Gastrocnemius medialis (tissue), 4 donors: ENCODE measurements at regions of chr1 and their contacts with region 1.

Region 1: GRCh38 chr1:32448773-32449456 is 16.0 kb upstream of the ZBTB8B start:
- DNase-seq: no peak
- ATAC-seq: no peak
- H3K4me3 ChIP-seq: no peak overlapping the region
- H3K27ac ChIP-seq: no peak overlapping the region
- H3K4me1 ChIP-seq: no peaks in the 10 kb centered on the region
- H3K27me3 ChIP-seq: no peaks in the 10 kb centered on the region
- CTCF ChIP-seq: peak in 1 of 5 experiments; percentile 30
- POLR2A ChIP-seq: no peak

Region 2: DNA sequence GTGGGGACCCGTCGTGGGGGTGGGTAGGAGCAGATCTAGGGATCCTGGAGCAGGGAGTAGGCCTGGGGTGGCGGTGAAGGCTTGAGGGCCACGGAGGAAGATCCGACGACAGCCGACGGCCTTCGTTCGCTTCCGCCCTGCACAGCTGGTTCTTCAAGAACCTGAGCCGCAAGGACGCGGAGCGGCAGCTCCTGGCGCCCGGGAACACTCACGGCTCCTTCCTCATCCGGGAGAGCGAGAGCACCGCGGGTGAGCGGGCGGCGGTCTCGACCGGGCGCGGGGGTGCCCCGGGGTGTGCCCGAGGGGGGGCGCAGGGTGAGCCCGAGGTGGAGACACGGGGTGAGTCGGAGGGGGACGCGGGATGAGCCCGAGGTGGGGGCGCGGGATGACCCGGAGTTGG is 173.5 kb before region 1 on chr1:
- in situ Hi-C with region 1: no loop called
- intact Hi-C with region 1: no loop called
- DNase-seq: no peak
- ATAC-seq: no peak
- H3K4me3 ChIP-seq: no peak overlapping the region
- H3K27ac ChIP-seq: no peak overlapping the region
- H3K4me1 ChIP-seq: no peaks in the 10 kb centered on the region
- H3K27me3 ChIP-seq: peaks cover 13 to 35% (median 20%) of the 10 kb centered on the region in 3 donors
- CTCF ChIP-seq: no peak
- POLR2A ChIP-seq: no peak

Region 3: GRCh38 chr1:32500387-32501209 is 51.7 kb after region 1 on chr1:
- in situ Hi-C with region 1: no loop called
- intact Hi-C with region 1: loop called (anchors 5 kb)
- DNase-seq: peak; percentile 59 to 76
- ATAC-seq: peak; percentile 55 to 69
- H3K4me3 ChIP-seq: peak overlapping the region; percentile 58 to 71 (median 63)
- H3K27ac ChIP-seq: peak overlapping the region; percentile 89 to 96 (median 92)
- H3K4me1 ChIP-seq: peaks cover 25 to 34% of the 10 kb centered on the region in 2 donors
- H3K27me3 ChIP-seq: no peaks in the 10 kb centered on the region
- CTCF ChIP-seq: peak in 4 of 5 experiments; percentile 36 to 60 (median 51)
- POLR2A ChIP-seq: peak; percentile 54 to 66

Region 4: GRCh38 chr1:32521165-32521564 is 72.2 kb after region 1 on chr1:
- in situ Hi-C with region 1: no loop called
- intact Hi-C with region 1: loop called (anchors 5 kb)
- DNase-seq: no peak
- ATAC-seq: no peak
- H3K4me3 ChIP-seq: peak overlapping the region in 1 of 4 donors; percentile 52
- H3K27ac ChIP-seq: no peak overlapping the region
- H3K4me1 ChIP-seq: peaks cover 0 to 4% of the 10 kb centered on the region in 2 donors
- H3K27me3 ChIP-seq: no peaks in the 10 kb centered on the region
- CTCF ChIP-seq: no peak
- POLR2A ChIP-seq: no peak

Region 5: DNA sequence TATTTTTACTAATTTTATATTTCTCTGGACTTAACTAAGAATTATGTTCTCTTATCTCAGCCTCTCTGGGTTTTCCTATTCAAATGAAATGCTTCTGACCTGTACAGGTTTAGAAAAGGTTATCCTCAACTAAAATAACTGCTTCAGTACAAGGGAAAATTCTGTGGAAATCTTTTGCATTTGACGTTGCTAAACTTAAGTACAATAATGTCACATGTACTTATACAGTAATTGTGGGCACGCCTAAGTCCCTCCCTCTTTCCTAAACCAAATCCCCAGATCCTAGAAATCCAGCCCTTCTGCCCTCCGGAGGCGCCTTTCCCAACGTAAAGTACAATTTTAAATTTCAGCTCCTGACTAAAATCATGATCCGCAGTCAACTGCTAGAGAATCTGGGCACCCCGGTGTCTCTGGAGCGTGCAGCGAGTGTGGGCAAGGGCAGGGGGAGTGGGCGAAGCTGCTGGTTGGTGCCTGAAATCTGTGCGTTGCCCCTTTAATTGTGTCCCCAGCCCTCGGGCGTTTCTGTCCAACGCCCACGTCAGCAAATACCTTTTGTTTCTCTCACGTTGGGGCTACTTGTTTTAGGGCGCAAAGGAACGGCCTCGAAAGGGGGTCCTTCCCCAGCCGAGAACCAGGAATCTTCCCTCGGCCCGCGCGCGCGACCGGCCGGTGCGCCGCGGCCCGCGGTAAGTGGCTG is 90.1 kb after region 1 on chr1 and contains the start of gene ZBTB8A:
- in situ Hi-C with region 1: no loop called
- intact Hi-C with region 1: loop called (anchors 5 kb)
- DNase-seq: peak in 1 of 2 donors; percentile 31
- ATAC-seq: peak; percentile 62 to 75
- H3K4me3 ChIP-seq: peak within 1 kb of the TSS; percentile 59 to 79 (median 67)
- H3K27ac ChIP-seq: peak within 1 kb of the TSS; percentile 51 to 80 (median 75)
- H3K4me1 ChIP-seq: no peaks in the 10 kb centered on the region
- H3K27me3 ChIP-seq: no peaks in the 10 kb centered on the region
- CTCF ChIP-seq: no peak
- POLR2A ChIP-seq: no peak
- total RNA-seq, gene ZBTB8A: 2.5 to 5.2 (median 3.9) TPM

Region 6: GRCh38 chr1:32612189-32612881 is 163.4 kb after region 1 on chr1:
- in situ Hi-C with region 1: no loop called
- intact Hi-C with region 1: loop called (anchors 10 kb)
- DNase-seq: peak; percentile 85 to 93
- ATAC-seq: peak; percentile 97 to 98
- H3K4me3 ChIP-seq: peak overlapping the region; percentile 55 to 63 (median 58)
- H3K27ac ChIP-seq: peak overlapping the region; percentile 57 to 82 (median 75)
- H3K4me1 ChIP-seq: peaks cover 0 to 4% of the 10 kb centered on the region in 2 donors
- H3K27me3 ChIP-seq: no peaks in the 10 kb centered on the region
- CTCF ChIP-seq: peak in 4 of 5 experiments; percentile 12 to 42 (median 28)
- POLR2A ChIP-seq: peak; percentile 41 to 53